ENCODE measurements at regions of chr15 and their contacts with region 1.

Region 1: GRCh38 chr15:40906091-40906990 is 12.1 kb downstream of the VPS18 start:
- DNase-seq: peak; percentile 65 to 98
- H3K4me3 ChIP-seq: peak overlapping the region; percentile 18 to 62 (median 36); a peak in 7 of 8 replicates
- H3K27ac ChIP-seq: no peak overlapping the region
- H3K4me1 ChIP-seq: peaks cover 0 to 13% (median 10%) of the 10 kb centered on the region in 4 experiments; a peak in 6 of 7 replicates
- H3K27me3 ChIP-seq: no peaks in the 10 kb centered on the region; a peak in 1 of 7 replicates
- CTCF ChIP-seq: peak in 2 of 3 experiments; percentile 80 to 97; a peak in 3 of 4 replicates
- EP300 ChIP-seq: no peak
- POLR2A ChIP-seq: no peak; a peak in 1 of 3 replicates
- RAD21 ChIP-seq: peak; percentile 80 to 87

Region 2: DNA sequence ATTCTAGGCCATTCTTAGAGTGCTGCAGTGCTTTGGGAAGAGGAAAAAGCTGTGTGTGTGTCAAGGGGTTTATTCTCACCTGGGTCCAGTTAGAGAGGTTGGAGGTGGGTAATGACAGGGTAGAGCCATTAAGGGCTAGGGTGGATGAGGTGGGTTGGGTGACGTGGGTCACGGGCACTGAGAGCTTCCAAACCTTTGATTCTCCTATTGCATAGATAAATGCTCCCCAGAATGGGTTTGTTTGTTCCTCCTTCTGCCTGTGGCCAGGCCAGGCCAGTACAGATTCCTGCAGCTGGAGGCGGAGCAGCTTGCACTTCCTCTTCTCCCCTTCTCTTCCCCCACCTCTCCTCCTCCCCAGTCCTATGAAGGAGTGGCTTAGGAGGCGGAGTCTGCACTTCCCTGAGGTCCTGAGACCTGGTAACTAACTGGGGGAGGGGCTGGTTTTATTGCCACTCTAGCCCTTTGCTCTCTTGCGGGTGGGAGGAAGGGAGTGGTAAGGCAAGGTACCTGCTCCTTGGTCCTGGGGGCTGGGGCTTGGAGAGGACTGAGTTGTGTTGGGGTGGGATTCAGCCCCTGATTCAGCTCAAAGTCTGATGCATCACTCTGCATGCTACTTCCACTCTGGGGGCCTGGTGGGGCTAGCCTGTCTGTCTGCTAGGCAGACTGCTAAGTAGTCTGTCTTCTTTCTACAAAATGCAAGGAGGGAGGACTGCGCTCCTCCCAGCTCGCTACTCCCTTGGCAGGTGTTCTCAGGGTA is 59.0 kb before region 1 on chr15:
- CTCF ChIA-PET with region 1: interaction called, 12 read pairs
- POLR2A ChIA-PET with region 1: no interaction called
- DNase-seq: no peak
- H3K4me3 ChIP-seq: peak overlapping the region in 1 of 4 experiments; percentile 84; a peak in 2 of 8 replicates
- H3K27ac ChIP-seq: no peak overlapping the region
- H3K4me1 ChIP-seq: peaks cover 0 to 26% (median 15%) of the 10 kb centered on the region in 4 experiments; a peak in 6 of 7 replicates
- H3K27me3 ChIP-seq: peaks cover 0 to 2% (median 0%) of the 10 kb centered on the region in 4 experiments; a peak in 1 of 7 replicates
- CTCF ChIP-seq: no peak
- EP300 ChIP-seq: no peak
- POLR2A ChIP-seq: no peak
- RAD21 ChIP-seq: no peak

Region 3: GRCh38 chr15:40928821-40929659 is 22.7 kb after region 1 on chr15 and contains the start of gene DLL4:
- CTCF ChIA-PET with region 1: interaction called, 619 read pairs
- POLR2A ChIA-PET with region 1: interaction called, 105 read pairs
- DNase-seq: peak in 1 of 2 experiments; percentile 87
- H3K4me3 ChIP-seq: peak within 1 kb of the TSS; percentile 31 to 71 (median 46)
- H3K27ac ChIP-seq: no peak within 1 kb of the TSS
- H3K4me1 ChIP-seq: peaks cover 3 to 36% (median 21%) of the 10 kb centered on the region in 4 experiments
- H3K27me3 ChIP-seq: peaks cover 69 to 94% (median 90%) of the 10 kb centered on the region in 4 experiments
- CTCF ChIP-seq: no peak
- EP300 ChIP-seq: no peak
- POLR2A ChIP-seq: peak in 1 of 2 experiments; percentile 69; a peak in 2 of 3 replicates
- RAD21 ChIP-seq: no peak
- total RNA-seq, gene DLL4: 0.48 and 0.60 TPM in 2 replicates

Region 4: GRCh38 chr15:40960926-40961325 is 54.6 kb after region 1 on chr15:
- CTCF ChIA-PET with region 1: interaction called, 56 read pairs
- POLR2A ChIA-PET with region 1: interaction called, 209 read pairs
- DNase-seq: no peak
- H3K4me3 ChIP-seq: no peak overlapping the region
- H3K27ac ChIP-seq: no peak overlapping the region
- H3K4me1 ChIP-seq: no peaks in the 10 kb centered on the region; a peak in 5 of 7 replicates
- H3K27me3 ChIP-seq: no peaks in the 10 kb centered on the region
- CTCF ChIP-seq: no peak
- EP300 ChIP-seq: no peak
- POLR2A ChIP-seq: no peak
- RAD21 ChIP-seq: no peak

Region 5: GRCh38 chr15:40982855-40983254 is 76.5 kb after region 1 on chr15:
- CTCF ChIA-PET with region 1: interaction called, 36 read pairs
- POLR2A ChIA-PET with region 1: no interaction called
- DNase-seq: no peak
- H3K4me3 ChIP-seq: no peak overlapping the region
- H3K27ac ChIP-seq: no peak overlapping the region
- H3K4me1 ChIP-seq: no peaks in the 10 kb centered on the region
- H3K27me3 ChIP-seq: no peaks in the 10 kb centered on the region
- CTCF ChIP-seq: no peak
- EP300 ChIP-seq: no peak
- POLR2A ChIP-seq: no peak
- RAD21 ChIP-seq: no peak

Region 6: GRCh38 chr15:41022487-41023090 is 116.2 kb after region 1 on chr15:
- CTCF ChIA-PET with region 1: interaction called, 257 read pairs
- POLR2A ChIA-PET with region 1: interaction called, 5 read pairs
- DNase-seq: peak in 1 of 2 experiments; percentile 58
- H3K4me3 ChIP-seq: no peak overlapping the region
- H3K27ac ChIP-seq: no peak overlapping the region
- H3K4me1 ChIP-seq: no peaks in the 10 kb centered on the region
- H3K27me3 ChIP-seq: no peaks in the 10 kb centered on the region
- CTCF ChIP-seq: peak; percentile 54 to 82 (median 82)
- EP300 ChIP-seq: no peak
- POLR2A ChIP-seq: no peak
- RAD21 ChIP-seq: peak; percentile 88

Region 7: DNA sequence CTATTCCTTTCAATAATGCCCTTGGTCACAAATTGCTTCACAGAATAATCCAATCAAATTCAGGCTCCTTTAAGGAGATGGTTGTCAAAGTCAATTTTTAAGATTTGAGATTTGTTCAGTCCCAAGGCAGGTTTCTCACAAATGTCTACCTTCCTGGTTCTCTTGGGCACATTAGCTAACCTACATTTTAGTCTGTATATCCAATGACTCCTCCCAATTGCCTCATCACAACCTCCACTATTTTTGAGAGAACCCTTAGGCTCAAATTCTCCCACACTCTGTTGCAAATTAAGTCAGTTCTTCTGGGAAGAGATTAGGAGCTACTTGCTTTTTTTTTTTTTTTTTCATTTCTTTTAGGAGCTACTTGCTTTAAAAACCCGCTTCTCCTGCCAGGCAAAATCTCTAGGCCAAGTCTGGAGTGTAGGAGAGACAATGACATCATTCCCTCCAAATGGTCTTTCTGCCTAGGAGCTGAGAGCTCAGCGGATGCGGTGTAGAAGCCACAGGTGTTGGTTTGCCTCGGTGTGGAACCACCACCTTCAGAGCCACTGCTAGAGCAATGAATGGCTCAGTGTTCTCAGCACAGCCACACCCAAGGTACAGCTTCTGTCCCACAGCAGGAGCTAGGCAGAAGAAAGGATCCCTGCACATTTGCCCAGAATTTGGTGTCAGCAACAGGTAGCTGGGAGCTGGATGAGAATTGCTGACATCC is 219.7 kb after region 1 on chr15:
- CTCF ChIA-PET with region 1: no interaction called
- POLR2A ChIA-PET with region 1: no interaction called
- DNase-seq: no peak
- H3K4me3 ChIP-seq: no peak overlapping the region
- H3K27ac ChIP-seq: no peak overlapping the region
- H3K4me1 ChIP-seq: no peaks in the 10 kb centered on the region
- H3K27me3 ChIP-seq: no peaks in the 10 kb centered on the region
- CTCF ChIP-seq: no peak
- EP300 ChIP-seq: no peak
- POLR2A ChIP-seq: no peak
- RAD21 ChIP-seq: no peak

Measured in H1 (cell line).